ENCODE measurements at regions of chr22 and their contacts with region 1.

Region 1: GRCh38 chr22:31248138-31248745 is 36.1 kb downstream of the LIMK2 start:
- DNase-seq: peak; percentile 50 to 85 (median 64)
- ATAC-seq: peak; percentile 100
- H3K4me3 ChIP-seq: peak overlapping the region; percentile 21
- H3K4me3 Mint-ChIP-seq: peak overlapping the region; percentile 83
- H3K27ac ChIP-seq: no peak overlapping the region
- H3K27ac Mint-ChIP-seq: peak overlapping the region; percentile 34
- H3K4me1 ChIP-seq: peaks cover 33% of the 10 kb centered on the region
- H3K4me1 Mint-ChIP-seq: peaks cover 44% of the 10 kb centered on the region
- H3K27me3 ChIP-seq: no peaks in the 10 kb centered on the region
- H3K27me3 Mint-ChIP-seq: no peaks in the 10 kb centered on the region
- CTCF ChIP-seq: no peak

Region 2: DNA sequence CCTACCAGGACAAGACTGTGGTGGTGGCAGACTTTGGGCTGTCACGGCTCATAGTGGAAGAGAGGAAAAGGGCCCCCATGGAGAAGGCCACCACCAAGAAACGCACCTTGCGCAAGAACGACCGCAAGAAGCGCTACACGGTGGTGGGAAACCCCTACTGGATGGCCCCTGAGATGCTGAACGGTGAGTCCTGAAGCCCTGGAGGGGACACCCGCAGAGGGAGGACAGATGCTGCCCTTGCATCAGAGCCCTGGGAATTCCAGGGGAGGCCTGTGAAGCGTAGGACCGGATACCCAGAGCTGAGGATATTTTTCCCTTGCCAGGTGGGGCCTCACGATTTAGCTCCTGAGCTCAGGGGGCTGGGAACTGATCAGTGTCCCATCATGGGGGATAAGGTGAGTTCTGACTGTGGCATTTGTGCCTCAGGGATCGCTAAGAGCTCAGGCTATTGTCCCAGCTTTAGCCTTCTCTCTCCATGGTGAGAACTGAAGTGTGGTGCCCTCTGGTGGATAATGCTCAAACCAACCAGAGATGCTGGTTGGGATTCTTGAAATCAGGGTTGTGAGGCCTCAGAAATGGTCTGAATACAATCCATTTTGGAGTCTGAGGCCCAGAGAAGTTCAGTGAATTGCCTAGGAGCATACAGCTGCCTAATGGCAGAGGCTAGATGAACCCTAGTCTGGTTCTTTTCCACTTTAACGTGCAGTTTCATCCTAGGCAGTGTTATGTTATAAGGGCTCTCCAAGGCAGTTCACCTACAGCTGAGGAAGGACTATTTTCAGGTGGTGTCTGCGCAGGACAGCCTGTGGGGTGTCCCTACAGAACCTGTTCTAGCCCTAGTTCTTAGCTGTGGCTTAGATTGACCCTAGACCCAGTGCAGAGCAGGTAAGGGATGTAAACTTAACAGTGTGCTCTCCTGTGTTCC is 24.5 kb after region 1 on chr22:
- CTCF ChIA-PET with region 1: interaction called, 5 read pairs
- POLR2A ChIA-PET with region 1: interaction called, 24 read pairs
- intact Hi-C with region 1: no loop called
- DNase-seq: peak in 9 of 14 experiments; percentile 38 to 79 (median 57)
- ATAC-seq: peak; percentile 70
- H3K4me3 ChIP-seq: no peak overlapping the region
- H3K4me3 Mint-ChIP-seq: peak overlapping the region; percentile 45
- H3K27ac ChIP-seq: peak overlapping the region in 1 of 2 donors; percentile 3
- H3K27ac Mint-ChIP-seq: peak overlapping the region; percentile 88
- H3K4me1 ChIP-seq: peaks cover 62% of the 10 kb centered on the region
- H3K4me1 Mint-ChIP-seq: peaks cover 74% of the 10 kb centered on the region
- H3K27me3 ChIP-seq: no peaks in the 10 kb centered on the region
- H3K27me3 Mint-ChIP-seq: no peaks in the 10 kb centered on the region
- CTCF ChIP-seq: peak; percentile 78

Region 3: GRCh38 chr22:31278622-31279326 is 30.5 kb after region 1 on chr22:
- CTCF ChIA-PET with region 1: interaction called, 5 read pairs
- POLR2A ChIA-PET with region 1: interaction called, 24 read pairs
- intact Hi-C with region 1: no loop called
- DNase-seq: peak in 11 of 14 experiments; percentile 48 to 87 (median 57)
- ATAC-seq: peak; percentile 73
- H3K4me3 ChIP-seq: peak overlapping the region; percentile 13
- H3K4me3 Mint-ChIP-seq: peak overlapping the region; percentile 79
- H3K27ac ChIP-seq: peak overlapping the region; percentile 75 to 85
- H3K27ac Mint-ChIP-seq: peak overlapping the region; percentile 98
- H3K4me1 ChIP-seq: peaks cover 87% of the 10 kb centered on the region
- H3K4me1 Mint-ChIP-seq: peaks cover 95% of the 10 kb centered on the region
- H3K27me3 ChIP-seq: no peaks in the 10 kb centered on the region
- H3K27me3 Mint-ChIP-seq: no peaks in the 10 kb centered on the region
- CTCF ChIP-seq: no peak

Region 4: GRCh38 chr22:31345331-31346254 is 97.4 kb after region 1 on chr22:
- CTCF ChIA-PET with region 1: no interaction called
- POLR2A ChIA-PET with region 1: no interaction called
- intact Hi-C with region 1: no loop called
- DNase-seq: peak; percentile 84 to 97 (median 90)
- ATAC-seq: peak; percentile 69
- H3K4me3 ChIP-seq: peak overlapping the region; percentile 88
- H3K4me3 Mint-ChIP-seq: peak overlapping the region; percentile 97
- H3K27ac ChIP-seq: peak overlapping the region in 1 of 2 donors; percentile 69
- H3K27ac Mint-ChIP-seq: peak overlapping the region; percentile 95
- H3K4me1 ChIP-seq: peaks cover 65% of the 10 kb centered on the region
- H3K4me1 Mint-ChIP-seq: peaks cover 54% of the 10 kb centered on the region
- H3K27me3 ChIP-seq: no peaks in the 10 kb centered on the region
- H3K27me3 Mint-ChIP-seq: no peaks in the 10 kb centered on the region
- CTCF ChIP-seq: peak; percentile 73